ENCODE measurements at regions of chr3 and their contacts with region 1.

Region 1: DNA sequence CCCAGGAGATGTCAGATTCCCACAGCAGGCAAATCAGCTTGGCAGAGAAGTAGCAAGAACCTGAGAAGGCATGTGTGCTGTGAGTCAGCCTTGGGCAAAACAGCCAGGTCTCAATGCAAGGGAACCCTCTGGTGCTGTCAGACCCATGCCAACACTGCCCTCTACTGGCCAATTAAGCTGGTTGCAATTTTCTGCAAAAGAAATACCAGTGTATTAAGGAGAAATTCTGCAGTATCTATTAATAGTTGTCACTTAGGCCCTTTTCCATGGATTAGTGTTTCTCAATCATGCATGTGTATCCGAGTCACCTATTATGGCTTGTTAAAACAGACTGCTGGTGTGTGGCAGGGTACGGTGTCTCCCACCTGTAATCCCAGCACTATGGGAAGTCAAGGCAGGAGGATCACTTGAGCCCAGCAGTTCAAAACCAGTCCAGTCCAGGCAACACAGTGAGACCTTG is 26.2 kb downstream of the MAP4 start:
- DNase-seq: peak; percentile 44 to 87 (median 66)
- ATAC-seq: peak; percentile 99
- H3K4me3 ChIP-seq: no peak overlapping the region
- H3K4me3 Mint-ChIP-seq: no peak overlapping the region
- H3K27ac ChIP-seq: no peak overlapping the region
- H3K27ac Mint-ChIP-seq: no peak overlapping the region
- H3K4me1 ChIP-seq: no peaks in the 10 kb centered on the region
- H3K4me1 Mint-ChIP-seq: peaks cover 5% of the 10 kb centered on the region
- H3K27me3 ChIP-seq: no peaks in the 10 kb centered on the region
- H3K27me3 Mint-ChIP-seq: no peaks in the 10 kb centered on the region
- CTCF ChIP-seq: peak; percentile 92

Region 2: DNA sequence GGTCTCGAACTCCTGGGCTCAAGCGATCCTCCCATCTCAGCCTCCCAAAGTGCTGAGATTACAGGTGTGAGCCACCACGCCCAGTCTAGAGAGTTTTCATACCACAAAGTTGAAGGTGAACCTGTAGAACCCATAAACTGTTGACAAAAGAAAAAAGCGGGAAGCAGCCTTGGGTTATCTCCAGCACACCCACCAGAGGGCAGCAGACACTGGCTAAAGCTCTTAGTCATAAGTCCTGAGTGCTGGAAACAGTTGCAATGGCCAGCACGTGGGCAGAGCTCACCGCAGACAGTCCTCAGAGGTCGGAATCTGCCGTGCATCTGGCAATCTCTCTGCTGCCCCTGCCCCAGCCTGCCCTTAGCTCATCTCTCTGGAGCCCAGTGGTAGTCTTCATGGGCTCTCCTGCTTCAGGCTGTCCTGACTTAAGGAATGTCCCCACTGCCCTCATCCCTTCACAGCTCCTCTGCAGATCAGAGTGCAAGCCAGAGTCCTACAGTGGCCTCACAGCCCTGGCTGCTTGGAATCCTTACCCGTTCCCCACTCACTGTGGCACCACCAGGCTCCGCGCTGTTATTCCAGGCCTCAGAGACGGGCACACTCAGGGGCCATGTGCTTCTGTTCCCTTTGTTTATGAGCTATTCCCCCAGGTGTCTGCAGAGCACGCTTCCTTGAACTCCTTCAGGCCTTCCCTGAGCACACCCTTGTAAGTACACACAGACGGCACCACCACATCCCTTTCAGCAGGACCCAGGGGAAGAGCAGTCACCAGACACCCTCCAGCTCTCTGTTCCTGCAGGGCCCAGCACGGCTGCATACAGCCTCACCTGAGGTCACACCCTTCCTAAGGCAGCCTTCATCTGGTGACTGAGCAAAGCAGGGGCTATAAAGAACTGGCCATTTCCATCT is 467.7 kb before region 1 on chr3:
- CTCF ChIA-PET with region 1: interaction called, 5 read pairs
- POLR2A ChIA-PET with region 1: no interaction called
- intact Hi-C with region 1: loop called (anchors 1 kb)
- DNase-seq: peak; percentile 51 to 87 (median 64)
- ATAC-seq: peak; percentile 95
- H3K4me3 ChIP-seq: no peak overlapping the region
- H3K4me3 Mint-ChIP-seq: no peak overlapping the region
- H3K27ac ChIP-seq: no peak overlapping the region
- H3K27ac Mint-ChIP-seq: no peak overlapping the region
- H3K4me1 ChIP-seq: peaks cover 7% of the 10 kb centered on the region
- H3K4me1 Mint-ChIP-seq: no peaks in the 10 kb centered on the region
- H3K27me3 ChIP-seq: no peaks in the 10 kb centered on the region
- H3K27me3 Mint-ChIP-seq: no peaks in the 10 kb centered on the region
- CTCF ChIP-seq: peak; percentile 82

Region 3: GRCh38 chr3:47836986-47837385 is 153.0 kb before region 1 on chr3:
- CTCF ChIA-PET with region 1: interaction called, 15 read pairs
- POLR2A ChIA-PET with region 1: no interaction called
- intact Hi-C with region 1: loop called (anchors 1 to 2 kb)
- DNase-seq: no peak
- ATAC-seq: no peak
- H3K4me3 ChIP-seq: no peak overlapping the region
- H3K4me3 Mint-ChIP-seq: no peak overlapping the region
- H3K27ac ChIP-seq: no peak overlapping the region
- H3K27ac Mint-ChIP-seq: no peak overlapping the region
- H3K4me1 ChIP-seq: peaks cover 4% of the 10 kb centered on the region
- H3K4me1 Mint-ChIP-seq: peaks cover 4% of the 10 kb centered on the region
- H3K27me3 ChIP-seq: no peaks in the 10 kb centered on the region
- H3K27me3 Mint-ChIP-seq: no peaks in the 10 kb centered on the region
- CTCF ChIP-seq: no peak

Region 4: DNA sequence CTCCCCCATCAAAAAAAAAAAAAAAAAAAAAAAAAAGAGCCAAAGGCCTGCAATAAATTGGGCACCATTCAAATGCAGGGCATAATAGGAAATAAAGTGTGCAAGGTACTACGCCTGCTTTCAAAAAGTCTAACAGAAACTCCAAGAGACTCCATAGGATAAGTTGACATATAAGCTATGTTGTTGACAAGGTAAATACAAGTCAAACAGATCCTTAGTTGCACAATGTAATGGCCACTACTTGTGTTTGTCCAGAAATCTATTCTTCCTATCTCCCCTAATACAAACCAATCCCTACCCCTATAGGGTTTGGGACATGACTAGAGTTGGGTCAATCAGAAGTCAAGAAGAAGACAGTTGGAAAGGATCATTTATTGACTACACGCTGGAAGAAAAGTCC is 10.2 kb after region 1 on chr3:
- CTCF ChIA-PET with region 1: interaction called, 23 read pairs
- POLR2A ChIA-PET with region 1: interaction called, 3 read pairs
- intact Hi-C with region 1: no loop called
- DNase-seq: no peak
- ATAC-seq: no peak
- H3K4me3 ChIP-seq: no peak overlapping the region
- H3K4me3 Mint-ChIP-seq: no peak overlapping the region
- H3K27ac ChIP-seq: no peak overlapping the region
- H3K27ac Mint-ChIP-seq: no peak overlapping the region
- H3K4me1 ChIP-seq: no peaks in the 10 kb centered on the region
- H3K4me1 Mint-ChIP-seq: peaks cover 10% of the 10 kb centered on the region
- H3K27me3 ChIP-seq: no peaks in the 10 kb centered on the region
- H3K27me3 Mint-ChIP-seq: no peaks in the 10 kb centered on the region
- CTCF ChIP-seq: no peak

Region 5: GRCh38 chr3:48119505-48120193 is 129.6 kb after region 1 on chr3:
- CTCF ChIA-PET with region 1: no interaction called
- POLR2A ChIA-PET with region 1: no interaction called
- intact Hi-C with region 1: no loop called
- DNase-seq: no peak
- ATAC-seq: no peak
- H3K4me3 ChIP-seq: no peak overlapping the region
- H3K4me3 Mint-ChIP-seq: no peak overlapping the region
- H3K27ac ChIP-seq: no peak overlapping the region
- H3K27ac Mint-ChIP-seq: no peak overlapping the region
- H3K4me1 ChIP-seq: no peaks in the 10 kb centered on the region
- H3K4me1 Mint-ChIP-seq: no peaks in the 10 kb centered on the region
- H3K27me3 ChIP-seq: no peaks in the 10 kb centered on the region
- H3K27me3 Mint-ChIP-seq: no peaks in the 10 kb centered on the region
- CTCF ChIP-seq: no peak

Region 6: DNA sequence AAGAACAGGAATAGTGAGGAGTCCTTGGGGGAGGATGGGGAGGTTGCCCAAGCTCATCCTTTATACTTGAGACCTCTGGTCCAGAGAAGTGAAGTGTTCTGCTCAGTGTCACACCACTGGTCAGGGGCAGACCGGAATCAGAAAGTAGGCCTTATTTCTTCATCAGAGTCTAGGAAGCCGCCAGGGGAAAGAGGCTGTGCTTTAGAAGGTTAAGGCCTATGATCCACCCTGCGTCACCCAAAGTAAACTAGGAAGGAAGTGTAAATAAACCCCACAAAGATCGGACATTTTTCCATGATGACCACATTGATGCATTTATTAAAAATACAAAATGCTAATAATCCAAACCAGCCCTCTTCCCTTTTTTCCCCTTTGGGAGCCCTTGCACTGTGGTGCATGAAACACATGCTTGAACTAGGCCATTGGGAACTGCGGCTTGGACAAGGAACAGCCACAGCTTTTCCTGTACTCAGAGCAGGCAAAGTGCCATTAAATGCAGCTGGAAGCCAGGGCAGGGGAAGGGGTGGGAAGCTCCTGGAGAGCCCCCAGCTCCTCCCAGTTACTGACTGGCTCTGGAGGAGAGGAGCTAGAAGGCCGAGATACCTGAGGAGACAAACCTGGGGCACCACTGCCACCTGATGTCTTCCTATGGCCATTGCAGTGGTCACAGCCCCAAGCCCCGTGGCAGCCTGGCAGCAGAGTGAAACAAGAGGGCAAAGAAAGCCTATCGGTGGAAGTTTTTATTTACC is 161.2 kb after region 1 on chr3:
- CTCF ChIA-PET with region 1: interaction called, 3 read pairs
- POLR2A ChIA-PET with region 1: interaction called, 4 read pairs
- intact Hi-C with region 1: loop called in 1 of 2 experiments (anchors 5 kb)
- DNase-seq: peak; percentile 19 to 70 (median 36)
- ATAC-seq: peak; percentile 79
- H3K4me3 ChIP-seq: no peak overlapping the region
- H3K4me3 Mint-ChIP-seq: no peak overlapping the region
- H3K27ac ChIP-seq: no peak overlapping the region
- H3K27ac Mint-ChIP-seq: no peak overlapping the region
- H3K4me1 ChIP-seq: no peaks in the 10 kb centered on the region
- H3K4me1 Mint-ChIP-seq: no peaks in the 10 kb centered on the region
- H3K27me3 ChIP-seq: no peaks in the 10 kb centered on the region
- H3K27me3 Mint-ChIP-seq: no peaks in the 10 kb centered on the region
- CTCF ChIP-seq: peak; percentile 46